CD8-positive, alpha-beta T cell (primary cell): ENCODE measurements at regions of chr11 and their contacts with region 1.

Region 1: GRCh38 chr11:59822989-59823566 is 12.5 kb upstream of the MRPL16 start:
- DNase-seq: peak in 4 of 9 experiments; percentile 5 to 59 (median 37)
- ATAC-seq: peak; percentile 38
- H3K4me3 ChIP-seq: no peak overlapping the region
- H3K4me3 Mint-ChIP-seq: no peak overlapping the region
- H3K27ac ChIP-seq: no peak overlapping the region
- H3K27ac Mint-ChIP-seq: no peak overlapping the region
- H3K4me1 ChIP-seq: no peaks in the 10 kb centered on the region
- H3K4me1 Mint-ChIP-seq: peaks cover 12% of the 10 kb centered on the region
- H3K27me3 ChIP-seq: no peaks in the 10 kb centered on the region
- H3K27me3 Mint-ChIP-seq: peaks cover 2% of the 10 kb centered on the region
- CTCF ChIP-seq: peak; percentile 49

Region 2: GRCh38 chr11:59992425-59992824 is 169.3 kb after region 1 on chr11:
- CTCF ChIA-PET with region 1: no interaction called
- POLR2A ChIA-PET with region 1: no interaction called
- intact Hi-C with region 1: no loop called
- DNase-seq: no peak
- ATAC-seq: no peak
- H3K4me3 ChIP-seq: no peak overlapping the region
- H3K4me3 Mint-ChIP-seq: no peak overlapping the region
- H3K27ac ChIP-seq: no peak overlapping the region
- H3K27ac Mint-ChIP-seq: no peak overlapping the region
- H3K4me1 ChIP-seq: no peaks in the 10 kb centered on the region
- H3K4me1 Mint-ChIP-seq: no peaks in the 10 kb centered on the region
- H3K27me3 ChIP-seq: no peaks in the 10 kb centered on the region
- H3K27me3 Mint-ChIP-seq: peaks cover 2% of the 10 kb centered on the region
- CTCF ChIP-seq: no peak

Region 3: DNA sequence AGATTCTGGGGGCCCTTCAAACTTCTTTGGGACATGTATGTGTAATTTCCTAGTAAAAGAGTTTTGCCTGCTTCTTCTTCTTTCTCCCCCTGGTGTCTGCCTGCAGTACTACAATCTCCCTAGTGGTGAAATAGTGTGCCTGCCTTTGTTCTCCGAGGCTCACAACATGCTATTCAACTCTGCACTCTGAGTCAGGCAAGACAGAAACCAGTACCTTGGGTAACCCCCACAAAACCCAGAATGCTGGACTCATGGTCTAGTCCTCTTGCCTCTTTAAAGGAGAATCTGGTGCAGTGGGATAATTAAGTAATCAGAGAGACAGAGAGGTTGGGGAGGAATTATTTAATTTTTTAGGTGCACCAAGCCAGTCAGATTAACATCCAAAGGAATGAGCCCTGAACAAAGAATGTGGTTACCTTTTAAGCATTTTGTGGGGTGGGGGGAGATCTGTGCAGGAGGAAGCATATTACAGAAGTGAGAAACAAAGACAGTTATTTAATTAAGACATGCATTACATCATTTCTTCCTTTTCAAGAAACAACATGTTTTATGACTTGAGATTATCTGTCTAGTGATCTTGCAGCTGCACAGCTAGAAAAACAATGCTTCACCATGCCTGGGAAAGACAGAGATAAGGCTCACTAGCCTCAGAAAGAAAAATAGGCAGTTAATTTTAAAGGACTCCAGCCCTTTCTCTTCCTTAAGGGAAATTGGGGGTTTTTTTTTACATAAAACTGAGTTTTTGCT is 370.8 kb after region 1 on chr11:
- CTCF ChIA-PET with region 1: no interaction called
- POLR2A ChIA-PET with region 1: no interaction called
- intact Hi-C with region 1: loop called in 1 of 2 experiments (anchors 1 kb)
- DNase-seq: peak; percentile 25 to 62 (median 48)
- ATAC-seq: peak; percentile 62
- H3K4me3 ChIP-seq: no peak overlapping the region
- H3K4me3 Mint-ChIP-seq: no peak overlapping the region
- H3K27ac ChIP-seq: no peak overlapping the region
- H3K27ac Mint-ChIP-seq: no peak overlapping the region
- H3K4me1 ChIP-seq: no peaks in the 10 kb centered on the region
- H3K4me1 Mint-ChIP-seq: no peaks in the 10 kb centered on the region
- H3K27me3 ChIP-seq: no peaks in the 10 kb centered on the region
- H3K27me3 Mint-ChIP-seq: peaks cover 3% of the 10 kb centered on the region
- CTCF ChIP-seq: peak; percentile 79

Region 4: GRCh38 chr11:60251485-60252212 is 428.6 kb after region 1 on chr11:
- CTCF ChIA-PET with region 1: no interaction called
- POLR2A ChIA-PET with region 1: no interaction called
- intact Hi-C with region 1: loop called in 1 of 2 experiments (anchors 5 kb)
- DNase-seq: peak in 3 of 9 experiments; percentile 7 to 30 (median 11)
- ATAC-seq: no peak
- H3K4me3 ChIP-seq: no peak overlapping the region
- H3K4me3 Mint-ChIP-seq: no peak overlapping the region
- H3K27ac ChIP-seq: no peak overlapping the region
- H3K27ac Mint-ChIP-seq: no peak overlapping the region
- H3K4me1 ChIP-seq: no peaks in the 10 kb centered on the region
- H3K4me1 Mint-ChIP-seq: no peaks in the 10 kb centered on the region
- H3K27me3 ChIP-seq: no peaks in the 10 kb centered on the region
- H3K27me3 Mint-ChIP-seq: peaks cover 22% of the 10 kb centered on the region
- CTCF ChIP-seq: peak; percentile 51